ENCODE measurements at regions of chr2 and their contacts with region 1.

Region 1: DNA sequence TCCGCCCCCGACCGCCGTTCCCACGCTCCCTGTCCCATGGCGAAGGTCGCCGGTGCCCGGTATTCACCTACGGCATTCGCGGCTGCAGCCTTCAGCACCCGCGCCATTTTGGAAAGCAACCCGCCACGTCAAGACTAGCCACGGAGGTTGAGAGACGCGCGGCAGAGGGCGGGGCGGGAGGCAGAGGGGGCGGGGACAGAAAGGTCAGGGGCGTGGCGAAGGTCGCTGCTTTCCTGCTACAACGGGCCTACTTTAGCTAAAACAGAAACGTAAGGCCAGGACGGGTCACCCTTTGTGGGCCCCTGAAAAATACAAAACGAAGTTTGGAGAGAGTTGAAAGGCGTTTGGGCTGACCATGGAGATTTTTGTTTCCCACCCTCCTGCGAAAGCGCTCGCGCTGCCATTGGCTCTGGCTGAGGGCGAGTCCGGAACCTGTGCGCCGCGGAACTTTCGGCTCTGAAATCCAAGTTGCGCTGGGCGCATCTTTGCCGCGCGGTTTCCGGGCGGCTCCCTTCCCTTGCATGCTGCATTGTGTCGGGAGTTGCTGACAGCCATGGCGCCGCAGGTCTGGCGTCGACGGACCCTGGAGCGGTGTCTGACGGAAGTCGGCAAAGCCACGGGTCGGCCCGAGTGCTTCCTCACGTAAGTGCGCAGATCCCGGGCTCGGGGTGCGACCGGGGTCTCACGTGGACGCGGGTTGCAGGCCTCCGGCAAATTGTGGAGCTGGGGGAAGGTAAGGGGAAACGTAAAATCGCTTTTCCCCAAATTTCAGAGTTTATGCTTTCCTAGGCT is at the starts of genes MCEE and MPHOSPH10:
- DNase-seq: peak; percentile 89
- H3K4me3 ChIP-seq: peak within 1 kb of the TSS; percentile 53 to 92 (median 90)
- H3K27ac ChIP-seq: peak within 1 kb of the TSS; percentile 72
- H3K4me1 ChIP-seq: peaks cover 16% of the 10 kb centered on the region
- H3K27me3 ChIP-seq: no peaks in the 10 kb centered on the region
- CTCF ChIP-seq: no peak
- POLR2A ChIP-seq: peak; percentile 90
- total RNA-seq, gene MCEE: 6.8 and 9.9 TPM in 2 replicates
- total RNA-seq, gene MPHOSPH10: 31.4 and 38.8 TPM in 2 replicates

Region 2: GRCh38 chr2:70994756-70995729 is 135.3 kb before region 1 on chr2 and contains the start of gene TEX261:
- CTCF ChIA-PET with region 1: no interaction called
- POLR2A ChIA-PET with region 1: no interaction called
- dilution Hi-C with region 1: no loop called
- intact Hi-C with region 1: loop called (anchors 5 kb)
- DNase-seq: peak; percentile 92
- H3K4me3 ChIP-seq: peak within 1 kb of the TSS; percentile 73 to 97 (median 75)
- H3K27ac ChIP-seq: peak within 1 kb of the TSS; percentile 32
- H3K4me1 ChIP-seq: peaks cover 20% of the 10 kb centered on the region
- H3K27me3 ChIP-seq: no peaks in the 10 kb centered on the region
- CTCF ChIP-seq: peak; percentile 81 to 82
- POLR2A ChIP-seq: peak; percentile 66
- total RNA-seq, gene TEX261: 63.3 and 71.2 TPM in 2 replicates

Region 3: GRCh38 chr2:71068218-71069035 is 61.9 kb before region 1 on chr2 and contains the start of gene NAGK:
- CTCF ChIA-PET with region 1: interaction called, 3 read pairs
- POLR2A ChIA-PET with region 1: no interaction called
- dilution Hi-C with region 1: no loop called
- intact Hi-C with region 1: loop called (anchors 2 kb)
- DNase-seq: peak; percentile 97
- H3K4me3 ChIP-seq: peak within 1 kb of the TSS; percentile 67 to 77 (median 72)
- H3K27ac ChIP-seq: peak within 1 kb of the TSS; percentile 69
- H3K4me1 ChIP-seq: peaks cover 27% of the 10 kb centered on the region
- H3K27me3 ChIP-seq: peaks cover 3 to 9% of the 10 kb centered on the region in 2 experiments
- CTCF ChIP-seq: no peak
- POLR2A ChIP-seq: peak; percentile 97
- total RNA-seq, gene NAGK: 125 and 130 TPM in 2 replicates

Region 4: DNA sequence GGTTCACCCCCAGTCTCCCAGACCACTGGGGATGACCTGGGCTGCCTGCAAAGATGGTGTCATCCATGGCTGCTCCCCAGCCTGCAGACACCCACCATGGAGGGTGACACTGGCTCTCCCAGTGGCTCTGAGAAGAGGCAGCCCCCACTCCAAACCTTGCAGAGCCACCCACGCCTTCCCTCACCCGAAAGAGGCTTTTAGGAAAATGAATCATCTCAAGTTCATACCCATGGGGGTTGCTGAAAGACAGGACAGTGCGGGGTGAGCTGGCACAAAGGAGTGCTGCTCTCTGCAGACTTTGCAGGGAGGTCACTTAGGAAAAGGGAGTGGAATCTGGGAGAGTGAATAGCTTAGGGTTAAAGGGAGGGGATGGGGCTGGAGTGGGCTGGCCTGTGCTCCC is 36.5 kb after region 1 on chr2:
- CTCF ChIA-PET with region 1: no interaction called
- POLR2A ChIA-PET with region 1: no interaction called
- dilution Hi-C with region 1: no loop called
- intact Hi-C with region 1: no loop called
- DNase-seq: no peak
- H3K4me3 ChIP-seq: no peak overlapping the region
- H3K27ac ChIP-seq: no peak overlapping the region
- H3K4me1 ChIP-seq: peaks cover 2% of the 10 kb centered on the region
- H3K27me3 ChIP-seq: peaks cover 2% of the 10 kb centered on the region in 2 experiments
- CTCF ChIP-seq: no peak
- POLR2A ChIP-seq: no peak

Region 5: GRCh38 chr2:71226965-71227560 is 96.8 kb after region 1 on chr2 and contains the start of gene PAIP2B:
- CTCF ChIA-PET with region 1: no interaction called
- POLR2A ChIA-PET with region 1: no interaction called
- dilution Hi-C with region 1: no loop called
- intact Hi-C with region 1: loop called (anchors 1 kb)
- DNase-seq: peak; percentile 100
- H3K4me3 ChIP-seq: peak within 1 kb of the TSS; percentile 46 to 59 (median 52)
- H3K27ac ChIP-seq: no peak within 1 kb of the TSS
- H3K4me1 ChIP-seq: peaks cover 10% of the 10 kb centered on the region
- H3K27me3 ChIP-seq: peaks cover 13 to 26% of the 10 kb centered on the region in 2 experiments
- CTCF ChIP-seq: no peak
- POLR2A ChIP-seq: no peak
- total RNA-seq, gene PAIP2B: 0.58 and 0.62 TPM in 2 replicates

Measured in endothelial cell of umbilical vein (primary cell).